ENCODE measurements at regions of chr20 and their contacts with region 1.

Region 1: GRCh38 chr20:45934586-45935415 is at the start of gene PCIF1:
- DNase-seq: peak; percentile 67
- H3K4me3 ChIP-seq: peak within 1 kb of the TSS; percentile 99
- CTCF ChIP-seq: no peak

Region 2: DNA sequence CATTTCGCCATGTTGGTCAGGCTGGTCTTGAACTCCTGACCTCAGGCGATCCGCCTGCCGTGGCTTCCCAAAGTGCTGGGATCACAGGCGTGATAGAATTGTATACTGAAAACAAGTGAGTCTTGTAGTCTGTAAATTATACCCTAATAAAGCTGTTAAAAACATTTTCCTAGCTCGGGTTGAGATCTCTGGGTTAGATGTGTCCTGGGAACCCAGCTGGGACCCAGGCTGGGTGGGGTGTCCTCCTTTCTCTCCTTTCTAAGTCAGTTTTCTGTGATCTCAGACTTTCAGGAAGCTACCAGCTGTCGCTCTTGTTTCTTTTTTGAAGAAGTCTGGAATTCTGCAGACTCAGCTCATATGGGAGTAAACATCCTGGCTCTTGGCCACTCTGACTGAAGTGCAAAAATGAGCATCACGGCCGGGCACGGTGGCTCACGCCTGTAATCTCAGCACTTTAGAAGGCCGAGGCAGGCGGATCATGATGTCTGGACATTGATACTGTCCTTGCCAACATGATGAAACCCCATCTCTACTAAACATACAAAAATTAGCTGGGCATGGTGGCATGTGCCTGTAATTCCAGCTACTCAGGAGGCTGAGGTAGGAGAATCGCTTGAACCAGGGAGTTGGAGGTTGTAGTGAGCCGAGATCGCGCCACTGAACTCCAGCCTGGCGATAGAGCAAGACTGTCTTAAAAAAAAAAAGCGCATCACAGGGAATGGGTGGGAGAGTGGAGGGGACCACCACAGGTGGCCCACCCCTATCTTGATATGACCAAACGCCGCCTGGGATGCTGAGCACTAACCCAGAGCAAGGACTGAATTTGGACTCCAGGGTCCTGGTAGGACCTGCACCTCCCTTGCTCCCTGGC is 10.2 kb before region 1 on chr20:
- CTCF ChIA-PET with region 1: interaction called, 5 read pairs
- POLR2A ChIA-PET with region 1: interaction called, 31 read pairs
- DNase-seq: no peak
- H3K4me3 ChIP-seq: no peak overlapping the region
- CTCF ChIP-seq: no peak

Region 3: GRCh38 chr20:45946149-45946970 is 11.6 kb after region 1 on chr20:
- CTCF ChIA-PET with region 1: interaction called, 8 read pairs
- POLR2A ChIA-PET with region 1: interaction called, 14 read pairs
- DNase-seq: no peak
- H3K4me3 ChIP-seq: no peak overlapping the region
- CTCF ChIP-seq: no peak

Measured in AG04449 (cell line).